HEK293T (cell line): ENCODE measurements at regions of chr6 and their contacts with region 1.

Region 1: GRCh38 chr6:10747251-10747972 is at the start of gene TMEM14B:
- DNase-seq: peak; percentile 100

Region 2: DNA sequence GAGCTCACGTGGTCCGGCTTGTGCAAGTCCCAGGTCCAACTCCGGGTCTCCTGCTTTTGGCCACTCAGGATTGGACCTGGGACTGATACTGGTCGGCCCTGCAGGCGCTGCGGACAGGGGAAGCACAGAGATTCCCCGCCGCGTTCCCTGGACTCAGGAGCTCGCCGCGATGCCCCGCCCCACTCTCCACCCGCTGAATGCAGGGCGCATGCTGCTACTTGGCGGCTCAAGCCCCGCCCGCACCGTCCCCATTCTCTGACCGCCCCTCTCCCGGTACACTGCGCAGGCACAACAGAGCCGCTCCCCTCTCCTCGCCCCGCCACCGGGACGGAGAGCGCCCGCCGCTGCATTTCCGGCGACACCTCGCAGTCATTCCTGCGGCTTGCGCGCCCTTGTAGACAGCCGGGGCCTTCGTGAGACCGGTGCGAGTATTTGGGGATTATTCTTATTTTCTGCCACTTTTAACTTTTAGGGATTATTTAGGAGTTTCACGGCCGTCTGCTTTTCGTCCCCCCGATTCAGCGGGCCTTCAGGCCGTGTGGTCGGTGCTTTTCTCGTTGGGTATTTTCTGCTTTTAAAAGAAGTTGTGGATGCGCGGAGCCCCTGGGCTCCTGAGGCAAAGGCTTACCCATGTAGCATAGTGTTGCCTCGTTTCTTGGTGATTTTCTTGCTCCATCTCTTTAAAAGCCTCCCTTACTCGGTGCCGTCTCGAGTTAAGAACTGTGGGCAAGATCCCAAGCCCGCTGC is 24.4 kb before region 1 on chr6 and contains the start of gene TMEM14C:
- CTCF ChIA-PET with region 1: interaction called, 5 read pairs
- POLR2A ChIA-PET with region 1: interaction called, 40 read pairs
- DNase-seq: peak; percentile 93

Region 3: DNA sequence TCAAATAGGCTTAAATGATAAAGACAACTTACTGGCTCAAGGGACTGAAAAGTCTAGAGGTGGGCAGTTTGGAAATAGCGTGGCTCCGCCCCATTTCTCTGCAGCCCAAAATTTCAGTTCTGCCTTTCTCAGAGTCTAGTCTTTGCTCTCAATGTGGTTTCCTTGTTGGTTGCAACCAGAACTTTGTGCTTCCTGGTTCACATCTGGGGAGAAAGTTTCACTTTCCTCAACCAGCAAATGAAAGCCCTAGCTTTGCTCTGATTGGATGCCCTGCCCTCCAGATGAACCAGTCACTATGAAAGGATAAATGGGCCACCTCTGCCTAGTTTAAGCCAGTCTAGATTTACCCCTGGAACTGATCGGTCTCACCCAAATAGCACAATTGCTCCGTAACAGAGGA is 154.4 kb after region 1 on chr6:
- CTCF ChIA-PET with region 1: no interaction called
- POLR2A ChIA-PET with region 1: no interaction called
- DNase-seq: no peak